A549 (cell line): ENCODE measurements at regions of chr19 and their contacts with region 1.

Region 1: GRCh38 chr19:55418185-55418584 is 10.6 kb upstream of the UBE2S start:
- DNase-seq: peak; percentile 88 to 91
- ATAC-seq: peak; percentile 94 to 95
- H3K4me3 ChIP-seq: no peak overlapping the region
- H3K27ac ChIP-seq: peak overlapping the region in 1 of 2 experiments; percentile 6; a peak in 1 of 6 replicates
- H3K4me1 ChIP-seq: peaks cover 8% of the 10 kb centered on the region; the same call in 1 of the 3 replicates
- CTCF ChIP-seq: peak; percentile 95
- EP300 ChIP-seq: no peak
- POLR2A ChIP-seq: no peak
- RAD21 ChIP-seq: peak; percentile 97 to 99

Region 2: DNA sequence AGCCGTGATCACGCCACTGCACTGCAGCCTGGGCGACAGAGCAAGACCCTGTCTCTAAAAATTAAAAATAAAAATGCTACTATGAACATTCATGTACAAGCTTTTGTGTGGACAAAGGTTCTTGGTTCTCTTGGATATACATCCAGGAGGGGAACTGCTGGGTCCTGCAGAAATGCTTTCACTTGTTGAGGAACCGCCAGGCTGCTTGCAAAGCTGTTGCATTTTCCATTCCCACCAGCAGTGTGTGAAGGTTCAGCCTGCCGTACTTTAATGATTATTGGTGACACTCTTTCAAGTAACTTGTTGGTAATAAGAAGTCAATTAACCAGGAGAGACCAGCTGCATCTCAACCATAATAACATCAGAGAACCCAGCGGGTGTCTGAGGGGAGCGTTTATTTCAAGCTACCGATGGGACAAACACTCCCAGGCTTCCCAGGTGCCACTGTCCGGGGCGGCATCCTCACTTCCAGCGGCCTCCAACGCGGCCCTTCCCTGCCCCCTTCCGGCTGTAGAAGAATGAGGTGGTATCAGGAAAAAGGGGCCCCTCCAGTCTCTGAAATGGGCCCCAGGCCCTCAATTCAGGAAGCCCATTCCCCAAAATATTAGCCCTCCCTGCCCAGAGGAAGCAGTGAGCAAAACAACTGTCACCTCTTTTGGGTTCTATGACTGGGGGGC is 285.6 kb before region 1 on chr19:
- CTCF ChIA-PET with region 1: interaction called, 10 read pairs
- POLR2A ChIA-PET with region 1: no interaction called
- DNase-seq: no peak
- ATAC-seq: no peak
- H3K4me3 ChIP-seq: no peak overlapping the region
- H3K27ac ChIP-seq: no peak overlapping the region
- H3K4me1 ChIP-seq: no peaks in the 10 kb centered on the region
- CTCF ChIP-seq: no peak
- EP300 ChIP-seq: no peak
- POLR2A ChIP-seq: no peak
- RAD21 ChIP-seq: no peak

Region 3: GRCh38 chr19:55206664-55207500 is 211.3 kb before region 1 on chr19:
- CTCF ChIA-PET with region 1: interaction called, 14 read pairs
- POLR2A ChIA-PET with region 1: no interaction called
- DNase-seq: peak; percentile 93 to 100
- ATAC-seq: peak; percentile 82 to 88
- H3K4me3 ChIP-seq: peak overlapping the region; percentile 30
- H3K27ac ChIP-seq: peak overlapping the region; percentile 62 to 83
- H3K4me1 ChIP-seq: peaks cover 43% of the 10 kb centered on the region
- CTCF ChIP-seq: no peak
- EP300 ChIP-seq: no peak
- POLR2A ChIP-seq: no peak; the same call in 1 of the 2 replicates
- RAD21 ChIP-seq: no peak

Region 4: DNA sequence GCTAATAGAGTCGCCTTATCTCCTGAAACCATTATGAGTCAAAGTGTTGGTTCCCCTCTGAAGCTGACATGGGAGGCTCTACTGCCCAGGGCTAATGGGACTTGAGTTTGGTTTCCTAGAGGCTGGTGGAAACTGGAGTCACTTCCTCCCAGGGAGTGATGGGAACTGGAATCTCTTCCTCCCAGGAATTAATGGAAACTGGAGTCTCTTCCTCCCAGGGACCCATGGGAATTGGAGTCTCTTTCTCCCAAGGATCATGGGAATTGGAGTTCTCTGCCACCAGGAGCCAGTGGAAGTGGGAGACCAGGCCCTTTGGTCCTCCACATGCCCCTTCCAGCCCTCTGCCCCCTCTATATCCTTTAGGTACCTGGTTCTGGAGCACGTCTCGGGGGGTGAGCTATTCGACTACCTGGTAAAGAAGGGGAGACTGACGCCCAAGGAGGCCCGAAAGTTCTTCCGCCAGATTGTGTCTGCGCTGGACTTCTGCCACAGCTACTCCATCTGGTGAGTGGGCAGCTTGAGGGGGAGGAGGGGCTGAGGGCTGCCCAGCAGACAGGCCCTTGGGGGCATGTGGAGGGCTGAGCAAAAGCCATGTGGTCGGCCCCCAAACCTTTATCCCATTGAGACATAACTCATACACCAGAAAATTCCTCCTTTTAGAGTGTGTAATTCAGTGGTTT is 128.9 kb before region 1 on chr19:
- CTCF ChIA-PET with region 1: interaction called, 51 read pairs
- POLR2A ChIA-PET with region 1: no interaction called
- DNase-seq: peak in 1 of 2 experiments; percentile 51
- ATAC-seq: peak; percentile 15 to 49; a peak in 4 of 6 replicates
- H3K4me3 ChIP-seq: no peak overlapping the region
- H3K27ac ChIP-seq: no peak overlapping the region
- H3K4me1 ChIP-seq: peaks cover 13% of the 10 kb centered on the region; the same call in 1 of the 3 replicates
- CTCF ChIP-seq: no peak
- EP300 ChIP-seq: no peak
- POLR2A ChIP-seq: no peak
- RAD21 ChIP-seq: no peak

Region 5: DNA sequence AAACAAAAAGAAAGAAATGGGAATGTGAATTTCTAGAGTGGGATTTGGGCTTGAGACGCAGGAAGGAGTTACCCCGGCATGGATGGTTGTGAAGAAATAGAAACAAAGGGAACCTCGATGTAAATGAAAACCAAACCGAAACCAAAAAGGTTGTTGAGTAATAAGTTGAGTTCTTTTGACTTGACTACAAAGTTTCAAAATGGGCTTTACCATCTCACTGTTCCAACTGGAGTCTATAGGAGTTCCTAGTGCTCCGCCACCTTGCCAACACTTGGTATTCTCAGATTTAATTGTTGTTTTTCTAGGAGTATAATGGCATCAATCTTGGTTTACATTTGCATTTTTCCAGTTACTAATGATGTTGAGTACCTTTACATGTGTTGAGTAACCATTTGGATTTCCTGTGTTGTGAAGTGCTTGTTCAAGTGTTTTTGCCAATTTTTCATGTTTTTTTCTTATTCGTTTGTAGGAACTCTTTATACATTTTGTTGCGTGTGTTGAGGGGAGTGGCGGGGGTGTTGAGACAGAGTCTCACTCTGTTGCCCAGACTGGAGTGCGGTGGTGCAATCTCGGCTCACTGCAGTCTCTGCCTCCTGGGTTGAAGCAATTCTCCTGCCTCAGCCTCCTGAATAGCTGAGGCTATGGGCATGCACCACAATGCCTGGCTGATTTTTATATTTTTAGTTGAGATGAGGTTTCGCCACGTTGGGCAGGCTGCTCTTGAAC is 19.8 kb before region 1 on chr19:
- CTCF ChIA-PET with region 1: interaction called, 61 read pairs
- POLR2A ChIA-PET with region 1: interaction called, 4 read pairs
- DNase-seq: no peak
- ATAC-seq: peak in 1 of 2 experiments; percentile 9; a peak in 3 of 6 replicates
- H3K4me3 ChIP-seq: no peak overlapping the region
- H3K27ac ChIP-seq: no peak overlapping the region
- H3K4me1 ChIP-seq: peaks cover 20% of the 10 kb centered on the region
- CTCF ChIP-seq: no peak
- EP300 ChIP-seq: no peak
- POLR2A ChIP-seq: no peak
- RAD21 ChIP-seq: no peak

Region 6: GRCh38 chr19:55452749-55453346 is 34.7 kb after region 1 on chr19:
- CTCF ChIA-PET with region 1: interaction called, 26 read pairs
- POLR2A ChIA-PET with region 1: no interaction called
- DNase-seq: peak; percentile 66 to 80
- ATAC-seq: peak in 1 of 2 experiments; percentile 63; a peak in 3 of 6 replicates
- H3K4me3 ChIP-seq: no peak overlapping the region
- H3K27ac ChIP-seq: no peak overlapping the region
- H3K4me1 ChIP-seq: peaks cover 31% of the 10 kb centered on the region
- CTCF ChIP-seq: no peak
- EP300 ChIP-seq: no peak
- POLR2A ChIP-seq: no peak
- RAD21 ChIP-seq: no peak

Region 7: GRCh38 chr19:55599468-55600279 is 181.5 kb after region 1 on chr19 and contains the start of gene FIZ1:
- CTCF ChIA-PET with region 1: no interaction called
- POLR2A ChIA-PET with region 1: no interaction called
- DNase-seq: peak; percentile 90 to 99
- ATAC-seq: peak; percentile 78 to 91
- H3K4me3 ChIP-seq: peak within 1 kb of the TSS; percentile 69
- H3K27ac ChIP-seq: peak within 1 kb of the TSS; percentile 95 to 96
- H3K4me1 ChIP-seq: peaks cover 20% of the 10 kb centered on the region
- CTCF ChIP-seq: no peak
- EP300 ChIP-seq: no peak
- POLR2A ChIP-seq: peak; percentile 33
- RAD21 ChIP-seq: no peak; a peak in 1 of 5 replicates
- polyA plus RNA-seq, gene FIZ1: 10.3 and 10.4 TPM in 2 replicates